ENCODE measurements at regions of chr1 and their contacts with region 1.

Region 1: GRCh38 chr1:27556781-27557595 is 47.0 kb downstream of the AHDC1 start:
- DNase-seq: peak; percentile 88
- H3K4me3 Mint-ChIP-seq: peak overlapping the region; percentile 43
- H3K27ac Mint-ChIP-seq: peak overlapping the region; percentile 94
- H3K4me1 Mint-ChIP-seq: peaks cover 42% of the 10 kb centered on the region
- H3K27me3 Mint-ChIP-seq: no peaks in the 10 kb centered on the region
- CTCF ChIP-seq: peak; percentile 93

Region 2: DNA sequence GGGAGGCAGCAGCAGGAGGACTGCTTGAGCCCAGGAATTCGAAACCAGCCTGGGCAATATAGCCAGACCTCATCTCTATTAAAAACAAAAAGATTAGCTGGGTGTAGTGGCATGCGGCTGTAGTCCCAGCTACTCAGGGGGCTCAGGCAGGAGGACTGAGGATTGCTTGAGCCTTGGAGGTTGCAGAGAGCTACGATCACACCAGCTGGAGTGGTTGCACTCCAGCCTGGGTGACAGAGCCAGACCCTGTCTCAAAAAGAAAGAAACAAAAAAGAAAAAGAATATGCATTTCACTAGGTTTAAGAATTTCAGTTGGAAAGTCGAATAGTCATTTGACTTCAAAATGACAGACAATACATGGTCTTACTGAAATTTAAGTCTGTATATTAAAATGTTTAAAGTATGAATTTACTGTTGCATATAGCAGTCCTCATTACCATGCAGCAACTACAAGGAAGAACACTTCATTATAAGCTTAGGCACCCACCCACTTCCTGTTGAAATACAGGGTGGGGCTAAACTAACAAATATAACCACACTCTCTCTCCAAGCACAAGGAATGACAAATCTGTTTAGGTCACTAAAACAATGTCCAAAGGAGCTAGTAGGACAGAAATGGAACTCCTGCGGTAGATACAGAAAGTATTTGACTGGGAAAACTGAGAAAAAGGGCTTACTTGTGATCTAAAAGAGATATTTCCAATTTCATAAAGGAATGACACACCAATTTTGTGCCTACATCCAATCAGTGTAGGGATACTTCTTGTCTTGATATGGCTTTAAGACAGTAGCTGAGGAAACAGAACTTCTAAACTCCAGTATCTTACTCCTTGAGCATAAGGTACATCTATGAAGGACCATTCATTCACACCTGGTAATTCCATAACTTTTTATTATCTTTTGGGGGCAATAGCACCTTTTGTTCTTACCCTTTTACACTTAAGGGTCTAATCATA is 120.5 kb before region 1 on chr1:
- CTCF ChIA-PET with region 1: interaction called, 12 read pairs
- intact Hi-C with region 1: no loop called
- DNase-seq: peak; percentile 33
- H3K4me3 Mint-ChIP-seq: peak overlapping the region; percentile 30
- H3K27ac Mint-ChIP-seq: peak overlapping the region; percentile 71
- H3K4me1 Mint-ChIP-seq: peaks cover 24% of the 10 kb centered on the region
- H3K27me3 Mint-ChIP-seq: no peaks in the 10 kb centered on the region
- CTCF ChIP-seq: no peak

Region 3: DNA sequence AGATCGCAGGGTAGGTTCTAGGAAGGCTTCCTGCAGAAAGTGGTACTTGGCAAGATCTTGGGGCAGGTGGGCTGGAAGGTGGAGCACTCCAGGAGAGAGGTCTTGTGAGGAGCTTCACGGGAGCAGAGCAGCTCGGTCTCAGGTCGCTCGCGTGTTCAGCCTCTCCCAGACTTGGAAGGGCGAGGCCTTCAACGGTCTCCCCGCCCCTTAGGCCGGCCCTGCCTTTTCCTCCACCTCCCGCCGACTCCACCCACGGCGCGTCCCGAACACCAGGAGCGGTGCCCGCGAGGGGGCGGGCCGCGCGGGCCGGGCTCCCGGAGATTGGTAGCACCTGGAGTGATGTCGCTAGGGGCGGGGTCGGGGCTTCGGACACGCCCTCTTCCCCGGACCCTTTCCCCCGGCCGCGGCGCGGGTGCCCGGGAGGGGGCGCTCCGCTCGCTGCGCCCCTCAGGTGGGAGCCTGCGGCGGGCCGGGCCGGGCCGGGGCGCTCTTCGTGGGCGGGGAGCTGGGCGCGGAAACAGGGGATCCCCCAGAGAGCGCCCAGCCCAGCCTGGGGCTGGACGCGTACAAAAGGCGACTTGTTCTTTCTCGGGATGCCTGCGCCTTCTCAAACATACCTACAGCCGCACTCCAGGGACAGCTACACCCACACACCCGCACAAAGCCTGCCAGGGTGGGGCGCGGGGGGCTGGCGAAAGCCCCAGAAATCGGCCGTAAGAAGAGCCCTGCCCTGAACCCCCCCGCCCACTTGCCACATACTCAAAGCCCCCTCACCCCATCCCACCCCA is 11.5 kb after region 1 on chr1:
- CTCF ChIA-PET with region 1: interaction called, 34 read pairs
- intact Hi-C with region 1: no loop called
- DNase-seq: peak; percentile 96
- H3K4me3 Mint-ChIP-seq: peak overlapping the region; percentile 59
- H3K27ac Mint-ChIP-seq: peak overlapping the region; percentile 69
- H3K4me1 Mint-ChIP-seq: peaks cover 76% of the 10 kb centered on the region
- H3K27me3 Mint-ChIP-seq: no peaks in the 10 kb centered on the region
- CTCF ChIP-seq: peak; percentile 79

Region 4: GRCh38 chr1:27603681-27604578 is 46.9 kb after region 1 on chr1 and contains the start of gene AHDC1:
- CTCF ChIA-PET with region 1: interaction called, 57 read pairs
- intact Hi-C with region 1: loop called (anchors 2 kb)
- DNase-seq: peak; percentile 87
- H3K4me3 Mint-ChIP-seq: peak within 1 kb of the TSS; percentile 78
- H3K27ac Mint-ChIP-seq: peak within 1 kb of the TSS; percentile 48
- H3K4me1 Mint-ChIP-seq: peaks cover 42% of the 10 kb centered on the region
- H3K27me3 Mint-ChIP-seq: no peaks in the 10 kb centered on the region
- CTCF ChIP-seq: no peak
- total RNA-seq, gene AHDC1: 20.8 and 21.5 TPM in 2 replicates

Region 5: GRCh38 chr1:27821761-27822315 is 264.9 kb after region 1 on chr1:
- CTCF ChIA-PET with region 1: no interaction called
- intact Hi-C with region 1: no loop called
- DNase-seq: no peak
- H3K4me3 Mint-ChIP-seq: no peak overlapping the region
- H3K27ac Mint-ChIP-seq: no peak overlapping the region
- H3K4me1 Mint-ChIP-seq: no peaks in the 10 kb centered on the region
- H3K27me3 Mint-ChIP-seq: no peaks in the 10 kb centered on the region
- CTCF ChIP-seq: no peak